ENCODE measurements at regions of chr22 and their contacts with region 1.

Region 1: GRCh38 chr22:32202539-32203180 is 2.2 kb downstream of the RFPL2 start:
- DNase-seq: peak in 7 of 10 donors; percentile 44 to 93 (median 62)

Region 2: DNA sequence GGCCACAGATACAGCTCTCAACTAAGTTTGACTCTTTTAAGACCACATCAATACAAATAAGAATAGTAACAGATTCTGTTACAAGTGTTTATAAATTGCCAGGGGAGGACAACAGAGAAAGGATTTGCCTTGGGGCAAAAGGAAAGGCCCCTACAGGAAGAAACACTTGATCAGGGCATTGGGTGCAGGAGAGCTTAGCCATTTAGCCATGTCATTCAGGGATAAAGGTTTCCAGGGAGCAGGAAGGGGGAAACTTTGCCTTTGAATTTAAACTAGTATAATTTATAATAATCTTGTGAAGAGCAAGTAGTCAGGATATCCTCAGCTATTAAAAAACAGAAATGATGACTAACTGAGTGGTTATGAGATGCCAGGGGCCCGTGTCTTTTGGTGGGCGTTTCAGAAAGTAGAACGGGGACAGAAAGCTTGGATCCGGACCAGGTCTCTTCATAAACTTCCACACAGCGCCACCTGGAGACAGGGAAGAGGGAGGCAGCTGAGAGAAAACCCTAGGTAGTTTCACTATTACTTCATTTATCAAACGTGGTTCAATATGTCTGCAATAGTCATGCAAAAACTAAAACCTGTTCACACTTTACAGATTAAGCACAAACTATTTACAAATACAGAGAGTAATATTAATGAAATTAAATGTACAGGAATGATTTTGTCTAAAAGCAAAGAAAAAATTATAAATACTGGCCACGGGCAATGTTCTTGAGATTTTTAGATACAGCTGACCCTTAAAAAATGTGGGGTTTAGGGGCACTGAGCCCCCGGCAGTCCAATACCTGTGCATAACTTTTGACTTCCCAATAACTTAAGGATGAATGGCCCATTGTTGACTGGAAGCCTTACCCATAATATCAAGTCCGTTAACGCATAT is 63.5 kb after region 1 on chr22:
- intact Hi-C with region 1: loop called (anchors 10 kb)
- DNase-seq: peak; percentile 42 to 92 (median 66)